Activated CD4-positive, alpha-beta T cell treated with anti-CD3 and anti-CD28 coated beads for 36 hours (primary cell): ENCODE measurements at regions of chr6 and their contacts with region 1.

Region 1: DNA sequence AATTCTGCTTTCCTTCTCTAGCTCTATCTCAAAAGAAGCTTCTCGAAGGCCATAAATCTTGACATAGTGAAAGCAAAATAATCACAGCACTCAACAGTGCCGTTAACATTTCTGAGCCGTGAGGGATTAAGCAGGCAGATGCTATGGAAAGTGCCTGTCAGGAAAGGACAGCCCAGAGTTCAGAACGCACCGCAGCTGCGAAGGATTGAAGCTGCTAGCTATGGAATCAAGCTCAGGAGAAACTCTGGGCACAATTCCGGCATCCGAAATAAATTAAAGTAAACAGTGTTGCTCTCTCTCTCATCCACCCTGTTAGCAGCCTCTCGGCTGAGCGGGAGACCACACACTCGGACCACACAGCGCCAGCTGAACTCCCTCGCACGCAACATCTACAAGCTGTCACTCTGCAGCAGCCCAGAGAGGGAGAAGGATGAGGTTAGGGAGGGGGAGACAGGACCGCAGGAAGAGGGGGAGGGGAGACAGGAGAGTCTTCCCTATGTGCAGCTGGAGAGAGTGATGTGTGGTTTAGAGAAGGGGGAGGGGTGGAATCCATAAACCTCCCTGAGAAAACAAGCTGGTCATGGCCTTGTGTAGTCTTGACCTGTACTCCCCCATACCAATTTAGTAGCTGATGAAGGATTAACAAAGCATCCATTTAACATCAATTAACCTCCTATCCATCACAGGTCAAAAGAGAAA is 9.0 kb downstream of the EXOC2 start:
- DNase-seq: peak; percentile 46
- ATAC-seq: peak; percentile 7
- H3K4me3 Mint-ChIP-seq: peak overlapping the region; percentile 38
- H3K27ac Mint-ChIP-seq: peak overlapping the region; percentile 61
- H3K4me1 Mint-ChIP-seq: peaks cover 53% of the 10 kb centered on the region
- H3K27me3 Mint-ChIP-seq: no peaks in the 10 kb centered on the region

Region 2: GRCh38 chr6:217048-217659 is 466.7 kb before region 1 on chr6:
- CTCF ChIA-PET with region 1: no interaction called
- POLR2A ChIA-PET with region 1: no interaction called
- intact Hi-C with region 1: loop called in 1 of 2 experiments (anchors 10 kb)
- DNase-seq: peak; percentile 68
- ATAC-seq: no peak
- H3K4me3 Mint-ChIP-seq: no peak overlapping the region
- H3K27ac Mint-ChIP-seq: peak overlapping the region; percentile 41
- H3K4me1 Mint-ChIP-seq: peaks cover 59% of the 10 kb centered on the region
- H3K27me3 Mint-ChIP-seq: peaks cover 11% of the 10 kb centered on the region

Region 3: DNA sequence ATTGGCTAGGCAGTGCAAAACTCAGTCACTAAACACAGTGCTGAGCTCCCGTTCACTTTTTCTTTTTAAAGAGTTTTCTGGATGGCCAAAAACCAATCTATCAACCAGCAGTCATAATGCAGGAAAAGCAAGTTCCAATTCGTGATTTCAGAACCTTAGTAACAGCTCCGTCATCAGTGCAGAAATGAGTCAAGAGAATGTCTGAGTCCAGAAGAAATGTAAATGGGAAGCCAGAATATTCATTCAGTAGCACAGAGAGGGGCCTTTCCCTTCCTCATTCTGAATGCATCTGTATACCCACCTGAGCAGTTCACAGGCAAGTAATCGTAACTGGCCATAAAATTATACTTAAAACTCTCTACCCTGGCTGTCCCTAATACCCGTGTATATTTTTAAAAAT is 47.4 kb before region 1 on chr6:
- CTCF ChIA-PET with region 1: no interaction called
- POLR2A ChIA-PET with region 1: no interaction called
- intact Hi-C with region 1: loop called in 1 of 2 experiments (anchors 5 kb)
- DNase-seq: peak; percentile 25
- ATAC-seq: peak; percentile 95
- H3K4me3 Mint-ChIP-seq: no peak overlapping the region
- H3K27ac Mint-ChIP-seq: no peak overlapping the region
- H3K4me1 Mint-ChIP-seq: peaks cover 18% of the 10 kb centered on the region
- H3K27me3 Mint-ChIP-seq: no peaks in the 10 kb centered on the region

Region 4: GRCh38 chr6:710601-711571 is 27.0 kb after region 1 on chr6:
- CTCF ChIA-PET with region 1: interaction called, 3 read pairs
- POLR2A ChIA-PET with region 1: no interaction called
- intact Hi-C with region 1: loop called (anchors 2 kb)
- DNase-seq: peak; percentile 59
- ATAC-seq: peak; percentile 92
- H3K4me3 Mint-ChIP-seq: peak overlapping the region; percentile 80
- H3K27ac Mint-ChIP-seq: peak overlapping the region; percentile 97
- H3K4me1 Mint-ChIP-seq: peaks cover 22% of the 10 kb centered on the region
- H3K27me3 Mint-ChIP-seq: peaks cover 6% of the 10 kb centered on the region

Region 5: DNA sequence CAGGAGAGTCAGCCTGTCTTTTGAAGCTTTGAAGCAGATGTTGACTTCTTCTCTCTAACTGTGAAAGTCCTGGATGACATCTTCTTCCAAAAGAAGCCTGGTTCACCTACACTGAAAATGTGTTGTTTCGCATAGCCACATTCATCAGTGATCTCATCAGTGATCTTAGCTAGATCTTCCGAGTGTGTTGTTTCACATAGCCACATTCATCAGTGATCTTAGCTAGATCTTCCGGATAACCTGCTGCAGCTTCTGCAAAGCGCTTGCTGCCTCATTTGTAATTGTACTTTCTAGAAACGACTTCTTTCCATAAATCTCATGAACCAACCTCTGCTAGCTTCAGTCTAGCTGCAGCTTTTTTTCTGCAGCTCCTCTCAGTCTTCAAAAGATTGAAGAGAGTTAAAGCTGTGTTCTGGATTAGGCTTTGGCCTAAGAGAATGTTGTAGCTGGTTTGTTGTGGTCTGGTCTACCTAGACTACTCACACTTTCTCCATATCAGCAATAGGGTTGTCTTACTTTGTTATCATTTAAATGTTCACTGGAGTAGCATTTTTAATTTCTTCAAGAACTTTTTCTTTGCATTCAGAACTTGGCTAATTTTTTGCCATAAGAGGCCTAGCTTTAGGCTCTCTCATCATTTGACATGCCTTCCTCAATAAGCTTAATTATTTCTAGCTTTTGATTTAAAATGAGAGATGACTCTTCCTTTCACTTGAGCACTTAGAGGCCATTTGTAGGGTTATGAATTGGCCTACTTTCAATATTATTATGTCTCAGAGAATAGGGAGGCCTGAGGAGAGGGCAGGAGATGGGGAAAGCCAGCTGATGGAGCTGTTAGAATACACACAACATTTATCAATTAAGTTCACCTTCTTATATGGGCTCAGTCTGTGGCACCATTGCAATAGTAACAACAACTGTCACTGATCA is 57.8 kb after region 1 on chr6:
- CTCF ChIA-PET with region 1: interaction called, 11 read pairs
- POLR2A ChIA-PET with region 1: no interaction called
- intact Hi-C with region 1: no loop called
- DNase-seq: peak; percentile 16
- ATAC-seq: peak; percentile 85
- H3K4me3 Mint-ChIP-seq: no peak overlapping the region
- H3K27ac Mint-ChIP-seq: peak overlapping the region; percentile 53
- H3K4me1 Mint-ChIP-seq: peaks cover 8% of the 10 kb centered on the region
- H3K27me3 Mint-ChIP-seq: peaks cover 8% of the 10 kb centered on the region

Region 6: DNA sequence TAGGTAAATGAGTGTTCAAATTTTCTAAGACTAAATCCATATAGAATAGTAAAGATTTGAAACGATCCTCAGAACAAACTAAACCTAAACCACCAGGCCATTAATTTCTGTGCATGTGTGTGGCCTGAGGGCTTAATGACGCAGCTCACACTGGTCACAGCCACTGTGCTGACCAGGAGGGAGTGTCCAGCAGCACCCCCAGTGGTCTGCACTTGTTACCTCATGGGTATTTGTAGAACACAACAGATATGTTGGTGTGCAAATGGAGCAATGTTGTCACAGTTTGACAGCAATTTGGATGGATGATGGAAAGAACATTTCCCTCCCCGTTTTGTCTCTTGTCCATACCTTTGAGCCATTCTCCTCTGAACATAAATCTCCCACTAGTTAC is 131.5 kb after region 1 on chr6:
- CTCF ChIA-PET with region 1: no interaction called
- POLR2A ChIA-PET with region 1: no interaction called
- intact Hi-C with region 1: no loop called
- DNase-seq: no peak
- ATAC-seq: no peak
- H3K4me3 Mint-ChIP-seq: no peak overlapping the region
- H3K27ac Mint-ChIP-seq: no peak overlapping the region
- H3K4me1 Mint-ChIP-seq: peaks cover 27% of the 10 kb centered on the region
- H3K27me3 Mint-ChIP-seq: peaks cover 17% of the 10 kb centered on the region